GM12878 (cell line): ENCODE measurements at regions of chr19 and their contacts with region 1.

Region 1: GRCh38 chr19:8580710-8581281 is 3.6 kb upstream of the MYO1F start:
- DNase-seq: no peak
- ATAC-seq: peak; percentile 62
- H3K4me3 ChIP-seq: no peak overlapping the region
- H3K27ac ChIP-seq: no peak overlapping the region
- H3K4me1 ChIP-seq: peaks cover 8% of the 10 kb centered on the region
- H3K27me3 ChIP-seq: peaks cover 0 to 5% of the 10 kb centered on the region in 2 experiments; a peak in 1 of 4 replicates
- CTCF ChIP-seq: peak; percentile 99
- EP300 ChIP-seq: no peak
- POLR2A ChIP-seq: no peak
- RAD21 ChIP-seq: peak; percentile 79

Region 2: GRCh38 chr19:8311461-8312376 is 269.1 kb before region 1 on chr19:
- CTCF ChIA-PET with region 1: no interaction called
- POLR2A ChIA-PET with region 1: no interaction called
- RAD21 ChIA-PET with region 1: no interaction called
- SMC1A ChIA-PET with region 1: no interaction called
- in situ Hi-C with region 1: no loop called
- intact Hi-C with region 1: no loop called
- DNase-seq: no peak
- ATAC-seq: no peak
- H3K4me3 ChIP-seq: no peak overlapping the region
- H3K27ac ChIP-seq: no peak overlapping the region
- H3K4me1 ChIP-seq: peaks cover 11% of the 10 kb centered on the region
- H3K27me3 ChIP-seq: no peaks in the 10 kb centered on the region
- CTCF ChIP-seq: no peak
- EP300 ChIP-seq: no peak
- POLR2A ChIP-seq: no peak
- RAD21 ChIP-seq: no peak

Region 3: GRCh38 chr19:8412783-8413628 is 167.8 kb before region 1 on chr19 and contains the start of gene MARCHF2:
- CTCF ChIA-PET with region 1: interaction called, 73 read pairs
- POLR2A ChIA-PET with region 1: no interaction called
- RAD21 ChIA-PET with region 1: interaction called, 23 read pairs
- SMC1A ChIA-PET with region 1: interaction called, 5 read pairs
- in situ Hi-C with region 1: loop called (anchors 5 kb)
- intact Hi-C with region 1: loop called (anchors 5 kb)
- DNase-seq: peak; percentile 73
- ATAC-seq: peak; percentile 100
- H3K4me3 ChIP-seq: peak within 1 kb of the TSS; percentile 77
- H3K27ac ChIP-seq: no peak within 1 kb of the TSS; the same call in 1 of the 2 replicates
- H3K4me1 ChIP-seq: peaks cover 4% of the 10 kb centered on the region; the same call in 1 of the 2 replicates
- H3K27me3 ChIP-seq: no peaks in the 10 kb centered on the region
- CTCF ChIP-seq: peak; percentile 40 to 70 (median 66)
- EP300 ChIP-seq: no peak
- POLR2A ChIP-seq: peak; percentile 66
- RAD21 ChIP-seq: peak; percentile 60
- polyA plus RNA-seq, gene MARCHF2: 1.6 to 2.8 TPM

Region 4: DNA sequence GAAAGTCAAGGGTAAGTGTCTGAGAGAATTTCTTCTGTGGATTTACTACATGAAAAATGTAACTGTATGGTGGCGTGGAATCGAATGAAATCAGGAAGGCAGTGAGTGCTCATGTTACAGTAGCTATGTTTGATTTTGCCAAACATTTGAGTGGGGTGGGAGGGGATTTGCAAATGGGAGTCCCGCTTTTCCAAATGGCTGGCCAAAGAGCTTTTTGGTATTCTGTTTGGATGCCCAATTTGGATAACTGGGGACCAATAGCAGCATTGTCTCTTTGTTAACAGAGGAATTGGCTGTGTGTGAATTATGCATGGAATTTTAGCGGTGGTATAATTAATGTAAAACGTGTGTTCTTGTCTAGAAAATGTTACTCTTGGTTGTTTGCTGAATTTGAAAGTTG is 118.2 kb before region 1 on chr19:
- CTCF ChIA-PET with region 1: interaction called, 10 read pairs
- POLR2A ChIA-PET with region 1: no interaction called
- RAD21 ChIA-PET with region 1: no interaction called
- SMC1A ChIA-PET with region 1: no interaction called
- in situ Hi-C with region 1: no loop called
- intact Hi-C with region 1: no loop called
- DNase-seq: no peak
- ATAC-seq: no peak
- H3K4me3 ChIP-seq: no peak overlapping the region
- H3K27ac ChIP-seq: no peak overlapping the region
- H3K4me1 ChIP-seq: peaks cover 9% of the 10 kb centered on the region
- H3K27me3 ChIP-seq: no peaks in the 10 kb centered on the region
- CTCF ChIP-seq: no peak
- EP300 ChIP-seq: no peak
- POLR2A ChIP-seq: no peak
- RAD21 ChIP-seq: no peak

Region 5: DNA sequence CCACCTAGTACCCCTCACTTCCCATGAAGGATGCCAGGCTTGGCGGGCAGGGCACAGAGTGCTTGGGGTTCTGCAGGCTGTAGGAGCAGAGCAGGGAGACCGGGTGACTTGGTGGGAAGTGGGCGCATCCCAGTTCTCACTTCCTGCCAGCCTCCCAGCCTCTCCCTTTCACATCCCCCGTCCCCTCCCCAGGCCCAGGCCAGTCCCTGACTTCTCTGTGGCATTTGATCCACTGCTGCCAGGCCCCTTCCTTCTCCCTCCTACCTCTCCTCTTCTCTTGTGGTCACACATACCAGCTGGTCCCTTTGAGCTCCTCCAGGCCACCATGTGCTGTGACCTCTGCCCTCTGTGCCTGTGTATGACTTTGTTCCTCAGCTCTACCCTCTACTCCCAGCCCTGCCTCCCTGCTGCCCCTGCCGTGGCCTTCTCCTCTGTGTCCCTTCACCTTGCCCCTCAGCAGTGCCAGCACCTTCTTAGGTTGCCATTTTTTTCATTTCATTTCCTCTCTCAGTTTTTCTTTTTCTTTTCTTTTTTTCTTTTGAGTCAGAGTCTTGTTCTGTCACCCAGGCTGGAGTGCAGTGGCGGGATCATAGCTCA is 23.1 kb before region 1 on chr19:
- CTCF ChIA-PET with region 1: interaction called, 16 read pairs
- POLR2A ChIA-PET with region 1: no interaction called
- RAD21 ChIA-PET with region 1: no interaction called
- SMC1A ChIA-PET with region 1: no interaction called
- in situ Hi-C with region 1: no loop called
- intact Hi-C with region 1: no loop called
- DNase-seq: no peak
- ATAC-seq: no peak
- H3K4me3 ChIP-seq: no peak overlapping the region
- H3K27ac ChIP-seq: no peak overlapping the region
- H3K4me1 ChIP-seq: no peaks in the 10 kb centered on the region
- H3K27me3 ChIP-seq: no peaks in the 10 kb centered on the region
- CTCF ChIP-seq: no peak
- EP300 ChIP-seq: no peak
- POLR2A ChIP-seq: no peak
- RAD21 ChIP-seq: no peak

Region 6: DNA sequence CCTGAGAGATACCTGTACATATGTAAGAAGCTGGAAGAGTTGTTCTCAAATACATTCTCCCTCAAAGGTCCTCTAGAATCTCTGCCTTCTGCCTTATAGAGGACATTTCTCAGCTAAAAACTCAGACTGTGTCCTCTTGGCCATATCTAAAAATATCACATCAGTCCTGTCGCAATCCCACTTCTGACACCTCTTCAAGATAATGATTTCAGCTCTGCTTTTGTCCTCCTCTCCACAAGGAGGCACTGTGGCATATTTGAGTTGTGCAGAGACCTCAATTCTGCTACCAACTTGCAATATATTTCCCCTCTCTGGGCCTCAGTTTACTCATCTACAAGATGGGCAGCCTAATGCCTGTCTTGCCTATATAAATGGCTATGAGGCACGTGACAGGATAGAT is 13.1 kb after region 1 on chr19:
- CTCF ChIA-PET with region 1: interaction called, 13 read pairs
- POLR2A ChIA-PET with region 1: no interaction called
- RAD21 ChIA-PET with region 1: interaction called, 5 read pairs
- SMC1A ChIA-PET with region 1: no interaction called
- in situ Hi-C with region 1: no loop called
- intact Hi-C with region 1: no loop called
- DNase-seq: no peak
- ATAC-seq: no peak
- H3K4me3 ChIP-seq: no peak overlapping the region
- H3K27ac ChIP-seq: no peak overlapping the region
- H3K4me1 ChIP-seq: no peaks in the 10 kb centered on the region
- H3K27me3 ChIP-seq: no peaks in the 10 kb centered on the region; a peak in 1 of 4 replicates
- CTCF ChIP-seq: 0 out of 6 replicates have a peak, but pooled peaks of 1 of the 3 experiments have one; percentile 3
- EP300 ChIP-seq: no peak
- POLR2A ChIP-seq: no peak
- RAD21 ChIP-seq: no peak